ENCODE measurements at regions of chr15 and their contacts with region 1.

Region 1: GRCh38 chr15:66619151-66619903 is 53.5 kb upstream of the LCTL start:
- DNase-seq: peak; percentile 90
- H3K4me3 ChIP-seq: no peak overlapping the region; a peak in 1 of 4 replicates
- H3K27ac ChIP-seq: no peak overlapping the region
- H3K4me1 ChIP-seq: peaks cover 7 to 8% of the 10 kb centered on the region in 2 experiments; a peak in 2 of 4 replicates
- H3K27me3 ChIP-seq: no peaks in the 10 kb centered on the region
- CTCF ChIP-seq: peak; percentile 89
- EP300 ChIP-seq: no peak
- RAD21 ChIP-seq: peak; percentile 83

Region 2: DNA sequence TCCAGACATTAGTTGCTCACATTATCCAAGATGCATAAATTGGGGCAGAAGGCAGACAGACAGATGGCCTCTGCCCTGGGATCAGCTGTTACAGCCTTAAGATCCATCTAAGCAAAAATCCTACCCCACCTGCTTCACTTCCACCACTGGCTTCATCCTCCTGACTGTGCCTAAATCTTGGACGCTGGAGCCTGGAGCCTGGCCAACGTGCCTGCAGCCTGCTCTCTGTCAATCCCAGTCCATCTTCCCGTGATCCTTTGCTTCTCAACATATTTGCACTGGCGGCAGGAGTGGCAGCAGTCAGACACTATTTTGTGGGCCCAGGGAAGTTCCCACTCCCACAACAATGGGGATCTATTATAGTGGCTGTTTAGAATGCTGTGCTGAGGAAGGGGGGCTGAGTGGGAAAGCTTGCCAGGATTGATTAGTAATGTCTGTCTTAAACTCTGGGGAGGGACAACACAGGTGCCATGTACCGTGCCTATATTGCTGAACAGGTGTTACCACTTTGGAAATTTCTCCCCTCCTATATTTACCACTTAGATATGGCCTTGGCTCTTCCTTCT is 487.0 kb before region 1 on chr15:
- CTCF ChIA-PET with region 1: no interaction called
- POLR2A ChIA-PET with region 1: no interaction called
- DNase-seq: no peak
- H3K4me3 ChIP-seq: no peak overlapping the region
- H3K27ac ChIP-seq: no peak overlapping the region
- H3K4me1 ChIP-seq: peaks cover 0 to 34% of the 10 kb centered on the region in 2 experiments; a peak in 1 of 4 replicates
- H3K27me3 ChIP-seq: peaks cover 27% of the 10 kb centered on the region; the same call in 1 of the 2 replicates
- CTCF ChIP-seq: no peak
- EP300 ChIP-seq: no peak
- RAD21 ChIP-seq: no peak

Region 3: DNA sequence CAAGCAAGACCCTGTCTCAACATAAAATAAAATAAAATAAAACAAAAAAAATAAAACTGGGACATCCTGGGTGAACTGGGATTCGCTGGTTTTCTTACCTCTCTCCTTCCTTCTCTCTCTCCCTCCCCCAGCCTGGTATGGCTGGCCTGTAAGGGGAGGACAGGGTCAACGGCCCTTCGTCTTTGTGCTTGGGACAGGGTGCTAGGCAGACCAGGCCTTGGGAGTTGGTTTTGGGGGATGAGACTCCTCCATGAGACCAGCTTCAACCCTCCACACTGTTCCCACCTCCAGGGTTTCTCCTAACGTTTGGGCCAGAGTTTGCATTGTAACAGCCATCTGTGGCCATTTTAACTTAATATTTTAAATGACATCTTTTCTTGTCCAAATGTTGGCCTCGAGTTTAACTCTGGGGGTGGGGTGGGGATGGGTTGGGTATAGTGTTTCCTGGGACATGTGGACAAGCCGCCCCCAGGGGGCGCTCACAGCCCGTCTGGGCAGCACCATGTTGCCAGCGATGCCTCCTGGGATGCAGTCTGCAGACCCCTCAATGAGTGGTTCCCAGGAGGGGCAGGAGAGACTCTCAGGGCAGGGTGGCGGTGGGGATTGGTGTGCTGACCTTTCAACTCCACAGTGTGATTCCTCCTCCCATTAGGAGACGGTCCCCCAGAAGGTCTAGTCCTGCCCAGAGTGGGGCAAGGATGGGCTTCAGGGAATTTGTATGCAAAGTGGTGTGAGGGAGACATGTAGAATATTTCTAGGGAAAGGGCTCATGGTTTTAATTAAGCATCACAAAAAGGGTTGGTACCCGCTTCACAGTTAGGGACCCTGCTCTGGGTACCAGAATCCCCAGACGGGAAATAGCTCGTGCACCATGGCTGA is 15.8 kb before region 1 on chr15:
- CTCF ChIA-PET with region 1: interaction called, 108 read pairs
- POLR2A ChIA-PET with region 1: no interaction called
- DNase-seq: peak; percentile 86
- H3K4me3 ChIP-seq: no peak overlapping the region
- H3K27ac ChIP-seq: no peak overlapping the region
- H3K4me1 ChIP-seq: no peaks in the 10 kb centered on the region; a peak in 1 of 4 replicates
- H3K27me3 ChIP-seq: no peaks in the 10 kb centered on the region
- CTCF ChIP-seq: peak; percentile 73
- EP300 ChIP-seq: no peak
- RAD21 ChIP-seq: peak; percentile 96

Region 4: GRCh38 chr15:66630801-66631351 is 11.5 kb after region 1 on chr15:
- CTCF ChIA-PET with region 1: interaction called, 24 read pairs
- POLR2A ChIA-PET with region 1: interaction called, 6 read pairs
- DNase-seq: peak; percentile 76
- H3K4me3 ChIP-seq: no peak overlapping the region
- H3K27ac ChIP-seq: peak overlapping the region in 1 of 2 experiments; percentile 94; a peak in 2 of 4 replicates
- H3K4me1 ChIP-seq: peaks cover 0 to 41% of the 10 kb centered on the region in 2 experiments; a peak in 2 of 4 replicates
- H3K27me3 ChIP-seq: no peaks in the 10 kb centered on the region
- CTCF ChIP-seq: no peak
- EP300 ChIP-seq: no peak
- RAD21 ChIP-seq: no peak

Region 5: DNA sequence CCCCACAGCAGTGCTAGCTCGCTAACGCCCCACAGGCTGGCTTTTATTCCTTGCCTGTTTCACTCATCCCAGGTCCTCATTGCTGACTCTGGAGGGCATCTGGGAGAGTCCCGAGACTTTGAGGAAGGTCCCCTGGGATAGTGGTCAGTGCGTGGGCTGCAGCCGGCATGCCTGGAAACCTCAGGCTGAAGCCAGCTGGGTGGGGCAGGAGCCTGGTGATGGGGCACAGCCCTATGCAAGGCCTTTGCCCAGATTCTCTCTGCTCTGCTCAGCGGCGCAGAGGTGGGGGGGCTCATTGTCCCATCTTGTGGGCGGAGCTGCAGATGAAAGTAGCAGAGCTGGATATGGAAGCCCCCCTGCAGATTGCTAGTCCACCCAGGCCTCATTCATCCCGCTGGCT is 27.0 kb after region 1 on chr15:
- CTCF ChIA-PET with region 1: interaction called, 10 read pairs
- POLR2A ChIA-PET with region 1: no interaction called
- DNase-seq: no peak
- H3K4me3 ChIP-seq: no peak overlapping the region
- H3K27ac ChIP-seq: no peak overlapping the region
- H3K4me1 ChIP-seq: peaks cover 9 to 15% of the 10 kb centered on the region in 2 experiments; a peak in 2 of 4 replicates
- H3K27me3 ChIP-seq: no peaks in the 10 kb centered on the region
- CTCF ChIP-seq: no peak
- EP300 ChIP-seq: no peak
- RAD21 ChIP-seq: no peak

Region 6: DNA sequence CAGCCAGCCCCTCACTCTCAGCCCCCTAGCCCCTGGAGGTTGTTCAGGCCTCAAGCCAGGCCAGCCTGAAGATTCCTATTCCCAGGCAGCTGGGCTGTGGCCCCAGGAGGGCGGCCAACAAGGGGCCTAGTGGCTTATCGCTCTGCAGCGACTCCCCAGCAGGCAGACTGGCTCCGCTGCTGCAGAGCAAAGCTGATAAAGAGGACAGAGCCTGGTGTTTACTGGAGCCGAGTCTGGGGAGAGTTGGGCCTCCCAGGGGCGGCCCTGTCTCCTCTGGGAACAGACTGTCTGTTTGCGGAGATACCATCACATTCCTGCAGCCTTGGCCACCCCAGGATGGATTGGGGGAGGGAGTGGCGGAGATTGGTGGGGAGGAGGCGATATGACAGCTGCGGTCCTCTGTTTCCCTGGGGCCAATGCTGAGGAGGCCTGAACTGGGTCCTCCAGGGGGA is 60.4 kb after region 1 on chr15:
- CTCF ChIA-PET with region 1: interaction called, 16 read pairs
- POLR2A ChIA-PET with region 1: no interaction called
- DNase-seq: peak; percentile 88
- H3K4me3 ChIP-seq: no peak overlapping the region
- H3K27ac ChIP-seq: peak overlapping the region; percentile 32 to 95
- H3K4me1 ChIP-seq: peaks cover 7 to 22% of the 10 kb centered on the region in 2 experiments; a peak in 3 of 4 replicates
- H3K27me3 ChIP-seq: no peaks in the 10 kb centered on the region
- CTCF ChIP-seq: no peak
- EP300 ChIP-seq: peak in 1 of 2 experiments; percentile 50; a peak in 1 of 4 replicates
- RAD21 ChIP-seq: peak; percentile 43

Region 7: GRCh38 chr15:66752078-66752477 is 132.8 kb after region 1 on chr15:
- CTCF ChIA-PET with region 1: no interaction called
- POLR2A ChIA-PET with region 1: no interaction called
- DNase-seq: no peak
- H3K4me3 ChIP-seq: no peak overlapping the region
- H3K27ac ChIP-seq: peak overlapping the region in 1 of 2 experiments; percentile 25; a peak in 2 of 4 replicates
- H3K4me1 ChIP-seq: peaks cover 22 to 33% of the 10 kb centered on the region in 2 experiments
- H3K27me3 ChIP-seq: no peaks in the 10 kb centered on the region
- CTCF ChIP-seq: no peak
- EP300 ChIP-seq: no peak
- RAD21 ChIP-seq: no peak

Region 8: DNA sequence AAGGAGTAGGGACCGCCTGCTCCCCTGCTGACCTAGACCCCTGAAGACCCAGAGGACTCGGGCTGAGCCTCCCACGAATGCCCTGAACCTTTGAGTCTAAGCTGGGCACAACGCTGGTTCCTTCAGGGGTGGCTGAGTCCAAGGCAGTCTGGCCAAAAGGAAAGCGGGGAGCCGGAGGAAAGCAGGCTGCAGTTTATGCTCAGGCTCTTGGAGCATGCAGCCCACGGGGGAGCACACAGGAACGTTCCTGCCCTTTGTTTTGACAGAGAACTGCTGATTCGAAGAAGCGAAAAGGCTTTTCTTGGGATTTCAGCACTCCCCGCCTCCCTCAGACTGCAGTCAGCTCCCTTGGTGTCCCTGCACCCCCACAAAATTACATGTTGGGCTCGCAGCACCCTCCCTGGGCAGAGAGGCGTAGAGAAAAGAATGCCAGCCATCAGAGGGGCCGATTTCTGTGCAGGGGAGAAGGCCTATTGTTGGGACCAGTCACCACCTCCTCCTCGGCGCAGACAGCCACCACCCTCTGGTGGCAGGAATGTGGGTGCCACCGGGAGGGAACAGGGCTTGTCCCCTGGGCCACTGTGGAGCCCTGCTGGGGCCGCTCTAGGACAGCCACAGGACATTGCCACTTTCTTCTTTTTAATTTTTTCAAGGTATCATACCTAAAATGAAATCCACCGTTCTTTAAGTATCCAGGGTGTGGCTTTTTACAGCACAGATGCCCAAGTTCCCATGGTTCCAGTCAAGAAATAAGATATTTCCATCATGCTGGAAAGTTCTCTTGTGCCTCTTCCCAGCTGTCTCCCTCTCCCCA is 154.9 kb after region 1 on chr15:
- CTCF ChIA-PET with region 1: interaction called, 44 read pairs
- POLR2A ChIA-PET with region 1: no interaction called
- DNase-seq: peak; percentile 95
- H3K4me3 ChIP-seq: peak overlapping the region in 1 of 2 experiments; percentile 19; a peak in 1 of 4 replicates
- H3K27ac ChIP-seq: peak overlapping the region; percentile 62 to 81
- H3K4me1 ChIP-seq: peaks cover 31 to 50% of the 10 kb centered on the region in 2 experiments
- H3K27me3 ChIP-seq: no peaks in the 10 kb centered on the region
- CTCF ChIP-seq: peak; percentile 92
- EP300 ChIP-seq: no peak
- RAD21 ChIP-seq: peak; percentile 92